ENCODE measurements at regions of chr12 and their contacts with region 1.

Region 1: DNA sequence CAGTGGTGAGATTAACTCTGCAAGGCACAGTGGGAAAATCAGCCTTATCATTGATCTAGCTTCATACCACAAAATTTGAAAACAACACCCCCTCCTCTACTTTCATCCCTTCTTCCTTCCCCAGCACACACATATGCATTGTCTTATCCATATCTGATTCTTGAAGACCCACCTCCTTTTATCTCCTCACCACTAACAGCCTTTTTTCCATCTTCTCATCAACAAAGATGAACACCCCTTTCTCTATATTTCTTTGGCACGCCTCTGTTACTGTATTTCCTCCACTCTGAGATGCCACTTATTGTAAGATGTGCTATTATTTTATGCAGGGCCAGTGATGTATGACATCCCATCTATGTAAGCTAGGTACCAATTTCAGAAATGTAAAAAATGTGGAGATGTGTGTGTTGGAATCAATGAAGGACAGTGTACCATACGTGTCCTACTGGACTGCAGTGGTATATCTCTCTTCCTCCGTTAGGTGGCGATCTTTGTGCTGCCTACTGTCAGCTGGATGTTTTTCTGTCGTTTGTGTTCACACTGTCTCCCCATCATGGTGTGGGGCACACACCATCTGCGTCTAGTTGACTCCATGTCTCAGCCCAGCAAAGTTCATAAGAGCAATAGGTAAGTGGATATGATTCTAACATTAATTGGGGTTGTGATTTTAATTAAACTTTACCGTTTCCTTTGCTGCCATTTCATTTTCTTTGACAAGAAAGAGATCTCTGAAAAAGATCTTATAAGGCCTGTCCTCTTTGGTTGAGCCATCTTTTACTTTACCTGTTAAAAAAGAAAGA is 24.0 kb downstream of the CCDC38 start:
- DNase-seq: peak; percentile 17 to 53 (median 25)
- ATAC-seq: peak; percentile 92
- H3K4me3 ChIP-seq: no peak overlapping the region
- H3K27ac ChIP-seq: no peak overlapping the region
- H3K4me1 ChIP-seq: no peaks in the 10 kb centered on the region
- H3K27me3 ChIP-seq: no peaks in the 10 kb centered on the region; a peak in 1 of 5 replicates
- CTCF ChIP-seq: peak; percentile 64 to 75 (median 75)
- EP300 ChIP-seq: no peak
- POLR2A ChIP-seq: no peak
- RAD21 ChIP-seq: peak; percentile 42 to 76

Region 2: DNA sequence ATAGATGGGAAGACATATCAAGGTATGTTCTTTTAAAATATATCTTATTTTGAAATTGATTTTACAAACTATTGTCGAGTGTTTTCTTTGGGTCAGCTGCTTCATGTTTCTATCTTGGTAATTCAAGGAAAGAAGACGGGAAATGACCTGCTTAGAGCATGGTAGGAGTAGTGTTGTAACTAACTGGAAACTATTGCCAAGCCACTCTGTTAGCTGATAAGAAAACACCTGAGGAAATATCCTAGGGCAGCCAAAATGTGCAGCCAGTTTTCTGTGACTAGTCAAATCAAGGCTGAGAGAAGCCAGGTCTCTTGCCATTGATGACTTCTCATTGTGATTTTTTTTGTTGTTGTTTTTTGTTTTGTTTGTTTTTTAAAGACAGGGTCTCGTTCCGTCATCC is 414.3 kb before region 1 on chr12:
- CTCF ChIA-PET with region 1: no interaction called
- POLR2A ChIA-PET with region 1: no interaction called
- in situ Hi-C with region 1: no loop called
- intact Hi-C with region 1: no loop called
- DNase-seq: no peak
- ATAC-seq: no peak
- H3K4me3 ChIP-seq: no peak overlapping the region
- H3K27ac ChIP-seq: no peak overlapping the region
- H3K4me1 ChIP-seq: no peaks in the 10 kb centered on the region
- H3K27me3 ChIP-seq: no peaks in the 10 kb centered on the region
- CTCF ChIP-seq: no peak
- EP300 ChIP-seq: no peak
- POLR2A ChIP-seq: no peak
- RAD21 ChIP-seq: no peak

Region 3: GRCh38 chr12:95608252-95609033 is 310.0 kb before region 1 on chr12:
- CTCF ChIA-PET with region 1: no interaction called
- POLR2A ChIA-PET with region 1: no interaction called
- in situ Hi-C with region 1: no loop called
- intact Hi-C with region 1: loop called (anchors 10 kb)
- DNase-seq: no peak
- ATAC-seq: no peak
- H3K4me3 ChIP-seq: no peak overlapping the region
- H3K27ac ChIP-seq: no peak overlapping the region
- H3K4me1 ChIP-seq: no peaks in the 10 kb centered on the region
- H3K27me3 ChIP-seq: peaks cover 0 to 5% of the 10 kb centered on the region in 2 experiments; a peak in 2 of 5 replicates
- CTCF ChIP-seq: no peak
- EP300 ChIP-seq: no peak
- POLR2A ChIP-seq: no peak
- RAD21 ChIP-seq: no peak

Region 4: DNA sequence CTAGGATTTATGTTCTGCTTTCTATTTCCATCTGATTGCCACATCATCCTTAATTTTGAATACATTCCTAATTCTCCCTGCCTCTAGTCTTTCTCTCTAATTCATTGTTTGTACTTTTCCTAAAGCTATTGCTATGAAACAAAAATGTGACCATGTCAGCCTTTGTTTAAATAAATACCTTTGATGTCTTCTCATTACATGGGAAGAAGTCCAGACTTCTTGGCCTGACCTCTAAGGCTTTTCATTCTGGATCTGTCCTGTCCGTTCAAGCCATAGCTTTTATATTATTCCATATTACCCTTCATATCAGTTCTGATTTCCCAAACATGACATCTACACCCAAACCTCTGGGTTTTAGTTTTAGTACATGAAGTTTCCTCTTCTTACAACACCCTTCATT is 390.5 kb after region 1 on chr12:
- CTCF ChIA-PET with region 1: no interaction called
- POLR2A ChIA-PET with region 1: no interaction called
- in situ Hi-C with region 1: no loop called
- intact Hi-C with region 1: no loop called
- DNase-seq: no peak
- ATAC-seq: no peak
- H3K4me3 ChIP-seq: no peak overlapping the region
- H3K27ac ChIP-seq: no peak overlapping the region
- H3K4me1 ChIP-seq: 0 out of 5 replicates have a peak, but pooled peaks cover 0 to 3% of the 10 kb centered on the region in 2 experiments
- H3K27me3 ChIP-seq: no peaks in the 10 kb centered on the region
- CTCF ChIP-seq: no peak
- EP300 ChIP-seq: no peak
- POLR2A ChIP-seq: no peak
- RAD21 ChIP-seq: no peak